ENCODE measurements at regions of chr3 and their contacts with region 1.

Region 1: GRCh38 chr3:120348981-120349818 is at the start of gene LRRC58:
- DNase-seq: peak; percentile 95
- H3K4me3 ChIP-seq: peak within 1 kb of the TSS; percentile 90 to 94
- H3K27ac ChIP-seq: peak within 1 kb of the TSS; percentile 87 to 96
- H3K4me1 ChIP-seq: peaks cover 6 to 12% of the 10 kb centered on the region in 2 experiments; a peak in 3 of 4 replicates
- H3K27me3 ChIP-seq: no peaks in the 10 kb centered on the region
- CTCF ChIP-seq: peak; percentile 31
- EP300 ChIP-seq: peak; percentile 19 to 39; a peak in 2 of 4 replicates
- RAD21 ChIP-seq: no peak; the same call in 1 of the 2 replicates
- polyA plus RNA-seq, gene LRRC58: 5.8 and 8.1 TPM in 2 replicates

Region 2: GRCh38 chr3:119937229-119937628 is 412.0 kb before region 1 on chr3:
- CTCF ChIA-PET with region 1: no interaction called
- POLR2A ChIA-PET with region 1: no interaction called
- DNase-seq: no peak
- H3K4me3 ChIP-seq: no peak overlapping the region
- H3K27ac ChIP-seq: no peak overlapping the region
- H3K4me1 ChIP-seq: no peaks in the 10 kb centered on the region
- H3K27me3 ChIP-seq: no peaks in the 10 kb centered on the region
- CTCF ChIP-seq: no peak
- EP300 ChIP-seq: no peak
- RAD21 ChIP-seq: no peak

Region 3: GRCh38 chr3:120095226-120095978 is 253.8 kb before region 1 on chr3:
- CTCF ChIA-PET with region 1: interaction called, 5 read pairs
- POLR2A ChIA-PET with region 1: interaction called, 28 read pairs
- DNase-seq: peak; percentile 77
- H3K4me3 ChIP-seq: peak overlapping the region; percentile 73 to 95
- H3K27ac ChIP-seq: peak overlapping the region; percentile 99 to 100
- H3K4me1 ChIP-seq: peaks cover 7 to 13% of the 10 kb centered on the region in 2 experiments; a peak in 3 of 4 replicates
- H3K27me3 ChIP-seq: no peaks in the 10 kb centered on the region
- CTCF ChIP-seq: no peak
- EP300 ChIP-seq: peak in 1 of 2 experiments; percentile 24; a peak in 1 of 4 replicates
- RAD21 ChIP-seq: no peak; the same call in 1 of the 2 replicates